GM10248 (cell line): ENCODE measurements at regions of chr2 and their contacts with region 1.

Region 1: GRCh38 chr2:179842498-179843153 is 18.8 kb downstream of the ZNF385B start:
- DNase-seq: peak; percentile 13
- CTCF ChIP-seq: peak; percentile 44

Region 2: GRCh38 chr2:180077295-180077906 is 234.8 kb after region 1 on chr2:
- CTCF ChIA-PET with region 1: interaction called, 11 read pairs
- POLR2A ChIA-PET with region 1: no interaction called
- DNase-seq: no peak
- CTCF ChIP-seq: peak; percentile 47